Breast epithelium (tissue), 4 donors: ENCODE measurements at regions of chr19 and their contacts with region 1.

Region 1: DNA sequence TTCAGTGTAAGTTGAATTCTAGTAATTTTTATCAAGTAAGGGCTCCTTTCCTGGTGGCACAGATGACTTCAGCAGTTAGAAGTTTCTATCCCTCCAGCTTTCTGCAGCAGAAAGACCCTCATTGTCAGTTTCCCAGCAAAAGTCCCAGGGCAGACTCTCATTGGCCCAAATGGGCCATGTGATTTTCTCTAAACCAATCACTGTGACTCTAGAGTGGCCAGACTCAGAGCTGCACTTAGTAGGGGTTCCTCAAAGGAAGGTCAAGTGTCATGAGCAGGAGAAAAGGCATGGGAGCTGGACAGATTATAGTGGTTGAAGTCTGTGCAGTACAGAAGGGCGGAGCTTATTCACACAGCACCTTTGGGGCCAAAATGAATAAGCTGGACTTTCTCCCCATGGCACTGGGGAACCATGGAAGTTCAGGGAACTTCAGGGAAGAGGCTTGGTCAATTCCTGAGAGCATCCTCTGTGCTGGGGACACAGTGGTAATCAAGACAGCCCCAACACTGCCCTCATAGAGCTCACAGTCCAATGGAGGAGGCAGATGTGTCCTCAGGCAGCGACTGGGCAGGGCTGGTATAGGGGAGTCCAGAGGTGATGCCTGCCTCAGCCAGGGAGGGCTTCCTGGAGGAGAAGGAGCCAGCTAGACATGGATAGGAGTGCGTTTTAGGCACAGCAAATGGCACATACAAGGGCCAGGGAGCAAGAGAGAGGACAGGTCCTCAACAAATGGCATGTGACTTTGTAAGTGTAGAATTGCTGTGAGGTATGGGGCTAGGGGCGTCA is 18.3 kb downstream of the CKM start:
- DNase-seq: no peak
- H3K4me3 ChIP-seq: no peak overlapping the region
- H3K27ac ChIP-seq: no peak overlapping the region
- H3K4me1 ChIP-seq: no peaks in the 10 kb centered on the region
- H3K27me3 ChIP-seq: no peaks in the 10 kb centered on the region
- CTCF ChIP-seq: no peak
- POLR2A ChIP-seq: no peak

Region 2: GRCh38 chr19:45027371-45027770 is 277.0 kb before region 1 on chr19:
- intact Hi-C with region 1: loop called (anchors 5 kb)
- DNase-seq: no peak
- H3K4me3 ChIP-seq: no peak overlapping the region
- H3K27ac ChIP-seq: no peak overlapping the region
- H3K4me1 ChIP-seq: no peaks in the 10 kb centered on the region
- H3K27me3 ChIP-seq: no peaks in the 10 kb centered on the region
- CTCF ChIP-seq: no peak
- POLR2A ChIP-seq: no peak

Region 3: GRCh38 chr19:45178262-45179071 is 125.9 kb before region 1 on chr19 and contains the start of gene BLOC1S3:
- intact Hi-C with region 1: no loop called
- DNase-seq: peak; percentile 100
- H3K4me3 ChIP-seq: peak within 1 kb of the TSS; percentile 91 to 92 (median 91)
- H3K27ac ChIP-seq: peak within 1 kb of the TSS; percentile 95 to 97
- H3K4me1 ChIP-seq: peaks cover 0 to 2% of the 10 kb centered on the region in 2 donors
- H3K27me3 ChIP-seq: no peaks in the 10 kb centered on the region
- CTCF ChIP-seq: peak in 2 of 3 donors; percentile 34 to 51
- POLR2A ChIP-seq: peak; percentile 45
- total RNA-seq, gene BLOC1S3: 10.2 to 13.0 (median 10.6) TPM